Aorta (tissue), 5 donors: ENCODE measurements at regions of chr3 and their contacts with region 1.

Region 1: GRCh38 chr3:190017521-190018288 is 103.0 kb downstream of the P3H2 start:
- DNase-seq: no peak
- ATAC-seq: no peak
- H3K4me3 ChIP-seq: no peak overlapping the region
- H3K27ac ChIP-seq: no peak overlapping the region
- H3K4me1 ChIP-seq: peaks cover 0 to 3% of the 10 kb centered on the region in 2 donors
- H3K27me3 ChIP-seq: no peaks in the 10 kb centered on the region

Region 2: DNA sequence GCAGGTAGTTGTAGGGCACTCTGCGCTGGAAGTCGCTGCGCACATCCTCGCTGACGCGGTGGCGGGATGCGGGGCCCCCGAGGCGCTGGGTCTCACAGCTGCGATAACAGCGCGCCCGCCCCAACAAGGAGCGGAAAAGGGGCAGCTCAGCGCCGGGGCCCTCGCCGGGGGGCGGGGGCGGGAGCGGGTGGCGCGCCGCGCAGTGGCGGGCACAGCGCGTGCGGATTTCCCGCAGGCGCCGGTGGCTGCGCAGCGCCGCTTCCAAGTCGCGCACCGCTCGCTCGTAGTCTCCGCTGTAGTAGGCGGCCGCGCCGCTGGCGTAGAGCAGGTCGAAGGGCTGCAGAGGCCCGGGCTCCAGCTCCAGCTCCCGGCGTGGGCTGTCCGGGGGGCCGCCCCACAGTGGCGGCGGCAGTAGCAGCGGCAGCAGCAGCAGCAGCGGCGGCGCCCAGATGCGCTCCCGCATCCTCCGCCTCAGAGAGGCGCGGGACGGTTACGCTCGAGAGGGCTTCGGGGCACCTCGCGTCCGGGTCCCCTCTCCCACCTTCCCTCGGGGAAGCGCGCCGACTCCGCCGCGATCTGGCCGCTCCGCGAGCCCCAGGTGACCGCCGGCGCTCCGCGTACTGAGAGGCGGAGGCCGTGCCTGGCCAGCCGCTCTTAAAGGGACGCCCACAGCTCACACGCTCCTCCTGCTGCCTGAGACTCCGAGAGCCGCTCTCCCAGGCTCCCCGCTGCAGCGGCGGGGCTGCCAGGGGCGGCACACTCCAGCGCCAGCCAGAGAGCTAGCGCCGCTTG is 102.8 kb after region 1 on chr3 and contains the start of gene P3H2:
- intact Hi-C with region 1: loop called (anchors 5 kb)
- DNase-seq: peak; percentile 92 to 93
- ATAC-seq: peak; percentile 95
- H3K4me3 ChIP-seq: peak within 1 kb of the TSS; percentile 75 to 88
- H3K27ac ChIP-seq: peak within 1 kb of the TSS in 1 of 2 donors; percentile 73
- H3K4me1 ChIP-seq: peaks cover 0 to 9% of the 10 kb centered on the region in 2 donors
- H3K27me3 ChIP-seq: no peaks in the 10 kb centered on the region
- total RNA-seq, gene P3H2: 23.9 to 25.8 TPM

Region 3: DNA sequence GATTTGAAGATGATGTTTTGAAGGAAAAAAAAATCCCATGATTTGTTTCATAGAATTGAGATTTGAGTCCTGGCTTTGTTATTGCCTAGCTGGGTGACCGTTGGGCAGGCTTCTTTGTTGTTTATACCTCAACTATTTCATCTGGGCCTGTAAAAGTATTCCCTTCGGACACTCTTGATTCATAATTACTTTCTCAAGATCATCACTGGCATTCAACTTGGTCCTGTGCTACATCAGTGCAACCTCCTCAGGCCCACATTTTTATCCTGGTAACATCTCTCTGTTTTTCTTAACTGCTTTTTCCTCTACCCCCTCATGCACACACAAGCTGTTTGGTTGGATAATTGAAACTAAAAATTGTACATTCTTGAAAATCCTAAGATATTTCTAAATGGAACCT is 170.5 kb after region 1 on chr3:
- intact Hi-C with region 1: loop called in 1 of 2 experiments (anchors 5 kb)
- DNase-seq: no peak
- ATAC-seq: no peak
- H3K4me3 ChIP-seq: no peak overlapping the region
- H3K27ac ChIP-seq: no peak overlapping the region
- H3K4me1 ChIP-seq: peaks cover 1 to 2% of the 10 kb centered on the region in 2 donors
- H3K27me3 ChIP-seq: no peaks in the 10 kb centered on the region